Activated CD4-positive, alpha-beta memory T cell treated with anti-CD3 and anti-CD28 coated beads, Interleukin-2, amount 10 ng/mL, durations not matched to agents 7 days and 5 days (primary cell): ENCODE measurements at regions of chr2 and their contacts with region 1.

Region 1: DNA sequence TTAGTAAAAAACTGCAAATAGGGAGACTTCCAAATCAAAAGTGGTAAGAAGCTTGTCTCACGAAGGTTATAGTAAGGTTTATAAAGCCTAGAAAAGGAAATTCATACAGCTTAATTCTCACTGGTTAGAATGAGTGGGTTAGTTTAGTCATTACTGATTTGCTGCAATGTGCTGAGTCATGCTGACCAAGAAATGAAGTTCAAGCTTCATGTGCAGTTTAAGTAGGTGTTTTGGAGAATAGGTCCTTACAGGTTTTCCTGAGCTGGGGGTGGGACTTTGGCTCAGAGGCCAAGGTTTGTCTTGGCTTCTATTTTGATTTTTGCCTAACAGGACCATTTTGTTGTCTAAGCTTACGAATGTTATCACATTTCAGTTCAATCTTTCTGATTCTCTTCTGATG is 15.1 kb downstream of the CLIP4 start:
- DNase-seq: peak; percentile 37
- H3K4me3 Mint-ChIP-seq: peak overlapping the region; percentile 23
- H3K27ac Mint-ChIP-seq: peak overlapping the region; percentile 33
- H3K4me1 Mint-ChIP-seq: peaks cover 35% of the 10 kb centered on the region
- H3K27me3 Mint-ChIP-seq: no peaks in the 10 kb centered on the region

Region 2: GRCh38 chr2:28958689-28959088 is 171.6 kb before region 1 on chr2:
- CTCF ChIA-PET with region 1: interaction called, 10 read pairs
- POLR2A ChIA-PET with region 1: no interaction called
- DNase-seq: peak; percentile 50
- H3K4me3 Mint-ChIP-seq: no peak overlapping the region
- H3K27ac Mint-ChIP-seq: no peak overlapping the region
- H3K4me1 Mint-ChIP-seq: peaks cover 8% of the 10 kb centered on the region
- H3K27me3 Mint-ChIP-seq: peaks cover 3% of the 10 kb centered on the region

Region 3: DNA sequence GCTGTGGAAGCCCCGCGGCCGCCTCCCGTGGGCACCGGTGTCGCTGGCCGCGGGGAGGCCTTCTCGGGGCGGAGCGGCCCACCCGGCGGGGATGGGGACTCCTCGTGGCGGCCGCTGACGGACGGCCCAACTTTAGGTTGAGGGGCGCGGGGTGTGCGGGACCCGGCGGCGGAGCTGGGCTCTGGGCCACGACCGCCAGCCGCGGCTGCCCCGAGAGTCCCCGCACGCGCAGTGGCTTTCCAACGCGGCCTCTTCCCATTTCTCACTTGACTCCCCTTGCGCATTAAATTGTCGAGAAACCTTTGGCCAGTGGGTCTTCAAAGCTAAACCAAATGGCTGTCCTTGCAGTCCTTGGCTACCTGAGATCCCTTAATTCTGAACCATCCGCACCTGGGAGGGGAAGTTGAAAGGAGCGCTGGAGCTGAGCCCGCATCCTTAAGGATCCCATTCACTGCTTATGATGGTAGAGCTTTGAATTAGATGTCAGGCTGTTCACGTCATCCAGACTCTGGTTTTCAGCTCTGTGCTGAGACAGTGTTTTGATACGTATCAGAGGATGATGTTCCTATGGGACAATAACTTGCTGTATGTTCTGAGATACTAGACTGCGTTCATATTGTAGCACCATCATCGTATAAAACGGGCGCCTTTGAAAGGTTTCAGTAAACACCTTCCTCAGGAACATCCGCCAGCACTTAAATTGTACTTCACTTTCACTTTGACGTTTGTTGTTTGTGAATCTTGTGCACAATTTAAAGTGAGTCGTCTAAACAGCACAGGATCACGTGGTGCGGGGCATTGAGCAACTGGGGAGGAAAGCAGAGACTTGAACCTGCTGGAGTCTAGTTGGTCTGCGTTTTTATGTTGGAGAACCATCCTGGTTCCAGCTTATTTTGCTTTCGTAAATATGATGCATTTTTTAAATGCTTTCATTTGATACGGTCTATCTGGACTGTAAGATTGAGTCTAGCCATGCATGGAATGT is 14.2 kb before region 1 on chr2:
- CTCF ChIA-PET with region 1: interaction called, 14 read pairs
- POLR2A ChIA-PET with region 1: interaction called, 67 read pairs
- DNase-seq: peak; percentile 88
- H3K4me3 Mint-ChIP-seq: peak overlapping the region; percentile 84
- H3K27ac Mint-ChIP-seq: peak overlapping the region; percentile 97
- H3K4me1 Mint-ChIP-seq: peaks cover 58% of the 10 kb centered on the region
- H3K27me3 Mint-ChIP-seq: peaks cover 6% of the 10 kb centered on the region